RWPE1 (cell line): ENCODE measurements at regions of chr11 and their contacts with region 1.

Region 1: DNA sequence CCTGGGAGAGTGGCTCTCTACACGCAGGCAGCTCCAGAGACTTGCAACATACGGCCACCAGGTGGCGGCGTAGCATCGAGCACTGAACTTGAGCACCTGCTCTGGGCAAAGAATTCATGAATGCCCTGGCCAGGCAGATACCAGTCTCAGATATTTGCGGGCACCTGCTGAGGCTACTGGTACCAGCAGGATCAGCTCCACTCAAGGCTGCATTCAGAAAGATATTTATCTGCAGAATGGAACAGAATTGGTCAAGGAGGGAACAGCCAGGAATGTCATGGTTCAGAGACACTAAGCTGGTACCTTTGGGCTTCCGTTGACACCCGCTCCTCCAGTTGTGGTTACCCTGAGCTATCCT is 10.8 kb upstream of the CCDC86 start:
- DNase-seq: peak; percentile 75
- H3K27ac ChIP-seq: no peak overlapping the region
- CTCF ChIP-seq: peak; percentile 92

Region 2: DNA sequence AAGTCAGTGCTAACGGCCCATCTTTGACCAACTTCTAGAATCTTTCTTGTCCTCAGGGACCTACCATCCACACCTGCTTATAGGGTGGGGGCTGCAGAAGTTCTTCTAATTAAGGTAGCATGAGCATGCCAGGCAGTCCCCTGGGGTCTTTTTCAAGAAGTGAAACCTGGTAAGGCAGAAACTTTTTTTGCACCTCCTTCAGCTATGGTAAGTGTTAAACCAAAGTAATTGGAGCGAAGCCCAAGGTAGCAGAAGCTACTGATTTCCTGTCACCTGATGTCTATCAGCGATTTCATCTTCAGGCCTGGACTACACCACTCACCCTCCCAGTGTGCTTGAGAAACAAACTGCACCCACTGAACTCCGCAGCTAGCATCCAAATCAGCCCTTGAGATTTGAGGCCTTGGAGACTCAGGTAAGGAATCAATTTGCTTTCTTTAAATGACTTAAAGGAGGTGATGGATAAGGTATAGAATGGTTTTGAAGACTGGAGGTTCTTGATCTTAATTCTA is 375.5 kb before region 1 on chr11 and contains the start of gene MS4A1:
- CTCF ChIA-PET with region 1: no interaction called
- POLR2A ChIA-PET with region 1: no interaction called
- DNase-seq: no peak
- H3K27ac ChIP-seq: no peak within 1 kb of the TSS
- CTCF ChIP-seq: no peak

Region 3: DNA sequence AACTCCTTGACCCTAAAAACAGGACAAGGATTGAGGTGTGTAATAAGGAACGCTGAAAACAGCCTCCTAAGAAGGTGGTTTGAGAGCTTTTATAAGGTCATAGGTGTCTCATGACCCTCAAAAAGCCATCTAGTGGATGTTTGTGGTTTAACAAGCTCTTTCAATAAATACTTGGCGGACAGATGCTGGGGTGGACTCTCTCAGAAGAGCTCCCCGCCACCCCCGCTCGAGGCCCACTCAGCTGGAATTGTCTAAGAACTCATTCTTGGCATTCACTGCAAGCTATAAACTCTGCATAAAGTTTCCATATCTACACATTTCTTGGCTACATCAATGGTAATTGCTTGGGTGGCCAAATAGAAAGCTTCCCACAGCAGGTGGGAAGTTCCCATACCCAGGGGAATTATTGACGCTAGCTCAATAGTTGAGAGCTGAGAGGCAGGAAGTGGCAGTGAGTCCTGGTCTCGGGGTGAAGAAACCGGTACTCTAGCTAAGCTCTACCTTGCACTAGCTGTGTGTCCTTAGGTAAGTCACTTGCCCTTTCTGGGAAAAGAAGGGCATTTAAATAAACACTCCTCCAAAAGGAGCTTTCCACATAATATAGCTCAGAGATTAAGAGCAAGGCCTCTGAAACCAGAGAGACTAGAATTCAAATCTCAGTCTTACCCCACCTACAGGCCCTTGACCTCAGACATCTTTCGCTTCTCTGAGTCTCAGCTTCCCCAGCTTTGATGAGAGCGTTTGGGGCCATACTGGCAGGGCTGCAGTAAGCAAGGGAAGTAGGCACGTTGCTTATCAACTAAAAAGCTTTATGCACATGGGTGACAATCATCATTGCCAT is 68.1 kb before region 1 on chr11:
- CTCF ChIA-PET with region 1: no interaction called
- POLR2A ChIA-PET with region 1: no interaction called
- DNase-seq: no peak
- H3K27ac ChIP-seq: no peak overlapping the region
- CTCF ChIP-seq: 0 out of 2 replicates have a peak, but pooled peaks have one; percentile 18

Region 4: DNA sequence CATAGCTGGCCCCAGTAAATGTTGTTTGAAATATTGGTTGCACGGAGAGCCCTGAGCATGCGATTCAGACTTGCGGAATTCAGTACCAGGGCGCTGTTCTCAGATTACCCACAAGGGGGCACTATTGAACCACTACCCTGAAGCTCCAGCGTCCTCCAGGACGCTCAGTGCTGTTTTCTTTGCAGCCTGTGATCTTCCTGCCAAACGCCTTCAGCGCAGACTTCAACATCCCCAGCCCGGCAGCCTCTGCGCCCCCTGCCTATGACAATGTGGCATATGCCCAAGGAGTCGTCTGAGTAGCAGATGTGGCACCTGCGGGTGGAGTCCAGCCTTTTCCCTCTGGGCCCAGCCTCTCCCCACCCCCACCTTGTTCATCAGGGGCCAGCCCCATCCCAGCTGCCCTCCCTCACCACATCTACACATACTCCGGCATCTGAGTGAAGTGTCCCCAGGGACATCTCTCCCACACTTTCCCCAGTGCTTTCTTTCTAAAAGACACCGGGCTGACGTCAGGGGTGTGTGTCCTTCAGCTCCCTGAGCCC is 55.6 kb before region 1 on chr11:
- CTCF ChIA-PET with region 1: interaction called, 14 read pairs
- POLR2A ChIA-PET with region 1: no interaction called
- DNase-seq: peak; percentile 73
- H3K27ac ChIP-seq: no peak overlapping the region
- CTCF ChIP-seq: peak; percentile 83

Region 5: GRCh38 chr11:60841797-60842667 is 10.9 kb after region 1 on chr11 and contains the start of gene CCDC86:
- CTCF ChIA-PET with region 1: interaction called, 14 read pairs
- POLR2A ChIA-PET with region 1: no interaction called
- DNase-seq: peak; percentile 100
- H3K27ac ChIP-seq: peak within 1 kb of the TSS; percentile 67
- CTCF ChIP-seq: no peak

Region 6: GRCh38 chr11:60878245-60879101 is 47.4 kb after region 1 on chr11:
- CTCF ChIA-PET with region 1: interaction called, 10 read pairs
- POLR2A ChIA-PET with region 1: no interaction called
- DNase-seq: no peak
- H3K27ac ChIP-seq: no peak overlapping the region
- CTCF ChIP-seq: no peak

Region 7: GRCh38 chr11:60887556-60887955 is 56.4 kb after region 1 on chr11:
- CTCF ChIA-PET with region 1: interaction called, 15 read pairs
- POLR2A ChIA-PET with region 1: no interaction called
- DNase-seq: no peak
- H3K27ac ChIP-seq: no peak overlapping the region
- CTCF ChIP-seq: no peak; the same call in 1 of the 2 replicates

Region 8: GRCh38 chr11:60899046-60899936 is 68.2 kb after region 1 on chr11:
- CTCF ChIA-PET with region 1: interaction called, 25 read pairs
- POLR2A ChIA-PET with region 1: no interaction called
- DNase-seq: peak; percentile 52
- H3K27ac ChIP-seq: no peak overlapping the region
- CTCF ChIP-seq: peak; percentile 97

Region 9: GRCh38 chr11:61129639-61130523 is 298.8 kb after region 1 on chr11:
- CTCF ChIA-PET with region 1: interaction called, 14 read pairs
- POLR2A ChIA-PET with region 1: no interaction called
- DNase-seq: peak; percentile 97
- H3K27ac ChIP-seq: peak overlapping the region; percentile 61
- CTCF ChIP-seq: peak; percentile 99